ENCODE measurements at regions of chr7 and their contacts with region 1.

Region 1: GRCh38 chr7:138097064-138097741 is 20.9 kb downstream of the AKR1D1 start:
- DNase-seq: peak; percentile 51
- H3K4me3 Mint-ChIP-seq: no peak overlapping the region
- H3K27ac Mint-ChIP-seq: no peak overlapping the region
- H3K4me1 Mint-ChIP-seq: peaks cover 10% of the 10 kb centered on the region
- H3K27me3 Mint-ChIP-seq: no peaks in the 10 kb centered on the region
- CTCF ChIP-seq: peak; percentile 37

Region 2: GRCh38 chr7:138081868-138082267 is 15.3 kb before region 1 on chr7:
- CTCF ChIA-PET with region 1: interaction called, 12 read pairs
- POLR2A ChIA-PET with region 1: interaction called, 8 read pairs
- intact Hi-C with region 1: no loop called
- DNase-seq: no peak
- H3K4me3 Mint-ChIP-seq: no peak overlapping the region
- H3K27ac Mint-ChIP-seq: no peak overlapping the region
- H3K4me1 Mint-ChIP-seq: peaks cover 12% of the 10 kb centered on the region
- H3K27me3 Mint-ChIP-seq: no peaks in the 10 kb centered on the region
- CTCF ChIP-seq: no peak

Region 3: GRCh38 chr7:138538518-138538917 is 441.3 kb after region 1 on chr7:
- CTCF ChIA-PET with region 1: no interaction called
- POLR2A ChIA-PET with region 1: no interaction called
- intact Hi-C with region 1: loop called (anchors 5 kb)
- DNase-seq: peak; percentile 13
- H3K4me3 Mint-ChIP-seq: no peak overlapping the region
- H3K27ac Mint-ChIP-seq: no peak overlapping the region
- H3K4me1 Mint-ChIP-seq: peaks cover 4% of the 10 kb centered on the region
- H3K27me3 Mint-ChIP-seq: no peaks in the 10 kb centered on the region
- CTCF ChIP-seq: no peak

Measured in MCF 10A (cell line).